Sigmoid colon (tissue), 7 donors: ENCODE measurements at regions of chr6 and their contacts with region 1.

Region 1: GRCh38 chr6:125041740-125042459 is 79.7 kb downstream of the RNF217 start:
- DNase-seq: no peak
- H3K4me3 ChIP-seq: no peak overlapping the region
- H3K27ac ChIP-seq: peak overlapping the region in 3 of 4 donors; percentile 6 to 54 (median 11)
- H3K4me1 ChIP-seq: peaks cover 0 to 67% (median 31%) of the 10 kb centered on the region in 4 donors
- H3K27me3 ChIP-seq: no peaks in the 10 kb centered on the region
- CTCF ChIP-seq: no peak
- EP300 ChIP-seq: no peak
- POLR2A ChIP-seq: no peak

Region 2: DNA sequence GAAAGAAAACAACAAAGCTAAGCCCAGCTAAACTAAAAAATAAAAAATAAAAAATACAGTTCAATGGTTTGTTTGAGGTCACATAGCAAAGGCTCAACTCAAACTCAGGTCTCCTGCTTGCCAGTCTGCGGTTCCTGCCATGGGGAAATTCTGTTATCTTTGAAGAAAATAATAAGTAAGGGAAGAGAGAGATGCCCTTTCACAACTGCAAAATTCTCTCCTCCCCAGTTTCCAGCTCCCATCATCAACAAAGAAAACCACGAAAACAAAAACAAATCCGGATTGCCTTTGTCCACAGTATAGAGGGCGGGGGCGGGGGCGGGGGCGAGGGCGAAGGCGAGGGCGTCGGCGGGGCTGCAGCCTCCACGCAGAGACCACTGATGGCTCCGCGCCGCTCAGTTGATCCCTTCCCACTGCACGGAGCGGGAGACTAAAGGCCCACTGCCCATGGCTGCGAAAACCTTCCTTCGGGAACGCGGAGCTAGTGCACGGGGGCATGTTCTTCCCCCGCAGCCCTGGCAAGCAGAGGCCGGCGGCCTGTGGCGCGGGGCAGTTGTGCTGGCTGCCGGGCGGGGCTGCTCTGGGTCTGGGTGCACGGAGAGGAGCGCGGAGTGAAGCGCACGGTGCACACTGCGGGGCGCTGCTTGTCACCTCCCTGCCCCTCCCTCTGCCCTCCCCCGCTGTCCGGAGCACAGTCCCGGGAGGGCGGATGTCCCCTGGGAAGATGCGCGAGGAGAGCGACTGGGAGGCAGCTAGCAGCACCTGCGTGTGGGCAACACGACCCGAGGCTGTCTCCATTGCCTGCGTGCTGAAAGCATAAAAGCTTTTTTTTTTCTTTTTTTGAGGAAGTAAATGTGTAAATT is 57.5 kb after region 1 on chr6:
- intact Hi-C with region 1: loop called (anchors 5 kb)
- DNase-seq: peak; percentile 87
- H3K4me3 ChIP-seq: peak overlapping the region; percentile 41 to 57 (median 56)
- H3K27ac ChIP-seq: peak overlapping the region in 3 of 4 donors; percentile 76 to 81 (median 79)
- H3K4me1 ChIP-seq: peaks cover 0 to 75% (median 63%) of the 10 kb centered on the region in 4 donors
- H3K27me3 ChIP-seq: no peaks in the 10 kb centered on the region
- CTCF ChIP-seq: no peak
- EP300 ChIP-seq: no peak
- POLR2A ChIP-seq: no peak